ENCODE measurements at regions of chr13 and their contacts with region 1.

Region 1: DNA sequence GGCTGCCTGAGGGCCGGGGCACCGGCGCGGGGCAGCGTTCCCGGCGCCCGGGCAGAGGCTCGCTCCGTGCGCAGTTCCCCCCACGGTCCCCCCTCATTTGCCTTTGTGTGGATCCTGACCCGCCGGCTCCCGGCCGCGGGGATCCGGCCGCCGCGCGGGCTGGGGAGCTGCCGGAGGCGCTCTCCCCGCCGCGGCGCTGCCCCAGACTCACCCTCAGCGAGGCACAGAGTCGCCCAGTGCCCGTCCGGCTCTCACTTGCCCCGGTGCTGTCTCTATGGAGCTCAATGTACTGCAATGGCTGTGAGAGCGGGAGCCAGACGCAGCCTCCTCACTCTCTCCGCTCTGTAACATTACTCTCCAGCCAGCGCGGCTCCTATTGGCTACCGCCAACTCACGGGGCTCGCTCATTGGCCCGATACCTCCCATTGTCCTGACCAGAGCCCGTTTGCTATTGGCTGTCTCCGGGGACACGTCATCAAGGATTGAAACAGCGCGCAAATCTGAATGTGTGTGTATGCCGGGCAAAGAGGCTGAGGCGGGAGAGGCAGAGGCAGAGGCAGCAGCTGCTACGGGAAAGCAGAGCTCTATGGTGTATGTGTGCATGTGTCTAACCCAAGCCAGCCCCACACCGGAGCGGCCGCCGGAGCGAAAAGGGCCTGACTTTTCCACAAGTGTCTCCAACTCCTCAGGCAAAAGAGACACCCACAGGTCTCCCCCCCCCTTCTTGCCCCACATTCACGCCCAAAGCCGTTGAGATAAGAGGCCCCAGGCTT is at the start of gene HMGB1:
- DNase-seq: peak; percentile 99
- H3K4me3 ChIP-seq: peak within 1 kb of the TSS; percentile 91 to 98
- H3K27ac ChIP-seq: peak within 1 kb of the TSS; percentile 99
- H3K4me1 ChIP-seq: peaks cover 3% of the 10 kb centered on the region
- H3K27me3 ChIP-seq: no peaks in the 10 kb centered on the region
- CTCF ChIP-seq: peak in 1 of 4 experiments; percentile 27
- POLR2A ChIP-seq: peak; percentile 100
- total RNA-seq, gene HMGB1: 264 to 274 TPM

Region 2: DNA sequence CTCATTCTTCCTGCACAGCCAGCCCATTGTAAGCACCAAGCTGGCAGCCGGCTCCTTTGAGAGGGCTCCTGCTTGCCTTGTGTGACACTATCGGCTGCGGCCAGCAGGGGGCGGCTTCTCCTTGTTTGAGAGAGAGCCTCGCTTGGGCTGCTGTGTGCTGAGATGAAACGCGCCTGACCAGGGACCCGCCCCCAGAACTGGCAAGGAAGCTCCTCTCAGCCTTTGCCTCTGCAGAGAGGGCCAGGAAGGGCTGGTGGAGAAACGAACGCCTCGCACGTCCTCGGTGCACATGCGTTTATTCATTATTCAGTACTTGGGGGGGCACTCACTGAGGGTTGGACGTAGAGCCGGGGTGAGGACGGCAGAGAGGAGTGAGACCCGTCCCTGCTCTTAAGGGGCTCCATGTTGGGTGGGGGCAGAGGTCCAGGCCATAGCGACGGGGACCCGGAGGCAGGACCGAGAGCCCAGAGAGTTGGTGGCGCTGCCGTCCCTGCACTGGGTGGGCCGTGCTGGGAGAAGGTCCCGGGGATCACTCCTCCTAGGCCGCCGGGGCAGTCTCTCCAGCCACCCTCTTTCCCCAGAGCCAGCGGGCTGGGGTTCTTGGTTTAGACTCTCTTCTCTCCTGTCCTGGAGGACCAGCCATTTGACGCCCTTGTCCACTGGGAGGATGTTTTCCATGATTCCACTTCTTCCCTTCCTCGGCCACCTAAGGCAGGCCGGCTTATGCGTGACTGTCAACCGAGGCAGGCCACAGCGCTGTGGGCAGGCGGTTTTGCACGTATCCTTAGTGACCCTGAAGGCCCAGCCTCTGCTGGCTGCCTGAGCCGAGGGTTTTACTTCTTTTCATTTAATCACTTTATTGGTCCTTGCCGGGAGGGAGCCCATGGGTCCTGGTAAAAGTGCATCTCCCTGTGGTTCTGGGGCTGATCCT is 332.9 kb before region 1 on chr13:
- intact Hi-C with region 1: loop called (anchors 5 kb)
- DNase-seq: peak; percentile 97
- H3K4me3 ChIP-seq: no peak overlapping the region
- H3K27ac ChIP-seq: peak overlapping the region in 1 of 2 donors; percentile 30
- H3K4me1 ChIP-seq: no peaks in the 10 kb centered on the region
- H3K27me3 ChIP-seq: no peaks in the 10 kb centered on the region
- CTCF ChIP-seq: peak; percentile 81 to 96 (median 95)
- POLR2A ChIP-seq: no peak

Region 3: GRCh38 chr13:30395192-30396084 is 70.3 kb before region 1 on chr13:
- intact Hi-C with region 1: loop called (anchors 10 kb)
- DNase-seq: peak; percentile 99
- H3K4me3 ChIP-seq: peak overlapping the region; percentile 38 to 49
- H3K27ac ChIP-seq: peak overlapping the region; percentile 95 to 96
- H3K4me1 ChIP-seq: no peaks in the 10 kb centered on the region
- H3K27me3 ChIP-seq: no peaks in the 10 kb centered on the region
- CTCF ChIP-seq: no peak
- POLR2A ChIP-seq: peak; percentile 52

Region 4: DNA sequence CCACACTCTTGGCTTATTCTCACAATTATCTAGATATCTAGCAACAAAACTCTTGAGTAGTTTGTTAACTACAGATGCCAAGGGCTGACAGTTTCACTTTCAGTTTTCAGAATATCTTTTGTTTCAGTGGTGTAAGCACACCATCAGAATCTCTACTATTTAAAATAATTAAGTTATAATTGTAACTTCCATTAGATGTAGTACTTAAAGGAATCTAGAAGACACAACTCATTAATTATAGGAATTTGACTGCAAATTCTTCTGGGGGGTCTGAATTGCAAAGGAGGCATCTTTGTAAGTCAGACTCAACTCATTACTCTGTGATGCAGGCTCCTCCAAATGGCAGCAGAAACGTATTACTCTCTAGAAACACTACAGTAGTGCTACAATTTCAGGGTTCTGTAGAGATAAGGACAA is 107.1 kb after region 1 on chr13:
- intact Hi-C with region 1: loop called (anchors 10 kb)
- DNase-seq: no peak
- H3K4me3 ChIP-seq: peak overlapping the region; percentile 14 to 18
- H3K27ac ChIP-seq: peak overlapping the region; percentile 52 to 73
- H3K4me1 ChIP-seq: no peaks in the 10 kb centered on the region
- H3K27me3 ChIP-seq: no peaks in the 10 kb centered on the region
- CTCF ChIP-seq: peak in 1 of 4 experiments; percentile 17
- POLR2A ChIP-seq: no peak

Region 5: GRCh38 chr13:30802953-30803478 is 337.2 kb after region 1 on chr13:
- intact Hi-C with region 1: loop called (anchors 5 kb)
- DNase-seq: peak; percentile 83
- H3K4me3 ChIP-seq: peak overlapping the region; percentile 15 to 30
- H3K27ac ChIP-seq: peak overlapping the region; percentile 45 to 57
- H3K4me1 ChIP-seq: no peaks in the 10 kb centered on the region
- H3K27me3 ChIP-seq: no peaks in the 10 kb centered on the region
- CTCF ChIP-seq: peak; percentile 86 to 96 (median 92)
- POLR2A ChIP-seq: no peak

Measured in prostate gland (tissue), 2 donors.